Activated naive CD4-positive, alpha-beta T cell treated with anti-CD3 and anti-CD28 coated beads for 36 hours (primary cell): ENCODE measurements at regions of chr11 and their contacts with region 1.

Region 1: GRCh38 chr11:130131961-130132850 is 27.4 kb upstream of the ST14 start:
- DNase-seq: peak; percentile 63
- H3K4me3 Mint-ChIP-seq: no peak overlapping the region
- H3K27ac Mint-ChIP-seq: no peak overlapping the region
- H3K4me1 Mint-ChIP-seq: no peaks in the 10 kb centered on the region
- H3K27me3 Mint-ChIP-seq: no peaks in the 10 kb centered on the region

Region 2: GRCh38 chr11:129766898-129767604 is 365.2 kb before region 1 on chr11:
- CTCF ChIA-PET with region 1: no interaction called
- intact Hi-C with region 1: loop called (anchors 1 kb)
- DNase-seq: peak; percentile 38
- H3K4me3 Mint-ChIP-seq: no peak overlapping the region
- H3K27ac Mint-ChIP-seq: no peak overlapping the region
- H3K4me1 Mint-ChIP-seq: peaks cover 5% of the 10 kb centered on the region
- H3K27me3 Mint-ChIP-seq: no peaks in the 10 kb centered on the region

Region 3: DNA sequence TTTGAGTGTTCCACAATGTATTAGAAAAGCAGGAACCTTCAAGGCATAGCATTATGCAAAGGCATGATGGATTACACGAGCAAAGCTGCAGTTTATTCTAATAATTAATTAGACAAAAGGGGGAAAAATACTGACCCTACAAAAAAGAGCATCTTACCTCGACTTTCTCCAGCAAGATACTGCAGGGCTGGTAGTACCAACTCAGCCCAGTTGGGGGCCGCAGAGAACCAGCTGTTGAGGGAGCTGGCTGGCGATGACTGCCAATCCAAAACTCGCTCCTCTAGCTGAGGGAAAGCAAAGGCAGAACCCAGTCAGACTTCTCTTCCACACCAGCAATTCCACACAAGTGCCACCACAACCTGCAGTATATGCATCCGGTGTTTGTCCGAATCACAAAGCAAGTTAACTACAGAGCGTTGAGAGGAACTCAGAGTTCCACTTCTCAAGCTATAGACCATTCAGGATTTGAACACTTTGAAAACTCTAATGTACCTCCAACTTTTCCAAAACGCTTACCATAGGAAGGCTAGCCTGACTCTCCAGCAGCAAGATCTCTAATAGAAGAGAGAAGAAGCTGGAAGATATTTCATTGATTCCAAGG is 250.5 kb before region 1 on chr11:
- CTCF ChIA-PET with region 1: interaction called, 15 read pairs
- intact Hi-C with region 1: no loop called
- DNase-seq: peak; percentile 62
- H3K4me3 Mint-ChIP-seq: no peak overlapping the region
- H3K27ac Mint-ChIP-seq: no peak overlapping the region
- H3K4me1 Mint-ChIP-seq: no peaks in the 10 kb centered on the region
- H3K27me3 Mint-ChIP-seq: no peaks in the 10 kb centered on the region

Region 4: GRCh38 chr11:129930296-129930695 is 201.9 kb before region 1 on chr11:
- CTCF ChIA-PET with region 1: interaction called, 165 read pairs
- intact Hi-C with region 1: no loop called
- DNase-seq: no peak
- H3K4me3 Mint-ChIP-seq: no peak overlapping the region
- H3K27ac Mint-ChIP-seq: no peak overlapping the region
- H3K4me1 Mint-ChIP-seq: no peaks in the 10 kb centered on the region
- H3K27me3 Mint-ChIP-seq: no peaks in the 10 kb centered on the region

Region 5: GRCh38 chr11:129992161-129992944 is 139.9 kb before region 1 on chr11:
- CTCF ChIA-PET with region 1: interaction called, 32 read pairs
- intact Hi-C with region 1: loop called (anchors 1 kb)
- DNase-seq: peak; percentile 71
- H3K4me3 Mint-ChIP-seq: no peak overlapping the region
- H3K27ac Mint-ChIP-seq: no peak overlapping the region
- H3K4me1 Mint-ChIP-seq: peaks cover 6% of the 10 kb centered on the region
- H3K27me3 Mint-ChIP-seq: no peaks in the 10 kb centered on the region

Region 6: DNA sequence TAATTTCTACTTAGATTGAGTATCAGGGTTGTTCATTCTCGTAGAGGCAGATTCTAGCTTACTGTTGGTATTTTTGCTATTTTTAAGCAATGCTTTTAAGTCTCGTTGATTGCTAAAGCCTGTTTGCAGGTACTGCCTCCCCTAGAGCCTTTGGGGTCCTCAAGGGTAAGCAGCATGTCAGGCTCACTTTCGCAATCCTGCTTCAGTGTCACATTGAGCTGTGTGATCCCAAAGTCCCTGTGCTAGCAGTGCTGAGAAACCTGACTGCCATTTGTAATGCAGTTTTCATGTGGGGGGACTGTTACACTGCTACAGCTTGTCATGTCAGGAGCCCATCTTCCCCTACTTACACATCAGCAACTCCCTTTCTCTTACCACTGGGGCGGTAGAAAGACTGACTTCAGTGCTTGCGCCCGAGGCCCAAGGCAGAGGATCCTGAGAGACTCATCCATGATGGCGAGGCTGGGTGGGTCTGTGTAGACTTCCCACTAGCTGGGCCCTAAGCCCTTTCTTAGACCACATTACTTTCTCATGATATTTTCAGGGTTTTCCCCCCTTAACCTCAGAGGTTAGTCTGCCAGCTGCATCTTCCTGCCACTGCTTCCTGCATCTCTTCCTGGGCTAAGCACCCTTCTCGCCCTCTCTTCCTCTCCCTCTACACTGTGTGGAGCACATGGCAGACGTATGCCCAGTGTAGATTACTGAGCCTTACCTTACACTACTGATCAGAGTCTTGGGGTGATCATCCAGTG is 13.4 kb before region 1 on chr11:
- CTCF ChIA-PET with region 1: interaction called, 10 read pairs
- intact Hi-C with region 1: no loop called
- DNase-seq: peak; percentile 35
- H3K4me3 Mint-ChIP-seq: no peak overlapping the region
- H3K27ac Mint-ChIP-seq: no peak overlapping the region
- H3K4me1 Mint-ChIP-seq: peaks cover 46% of the 10 kb centered on the region
- H3K27me3 Mint-ChIP-seq: peaks cover 7% of the 10 kb centered on the region

Region 7: GRCh38 chr11:130585545-130585944 is 453.3 kb after region 1 on chr11:
- CTCF ChIA-PET with region 1: no interaction called
- intact Hi-C with region 1: no loop called
- DNase-seq: no peak
- H3K4me3 Mint-ChIP-seq: no peak overlapping the region
- H3K27ac Mint-ChIP-seq: no peak overlapping the region
- H3K4me1 Mint-ChIP-seq: no peaks in the 10 kb centered on the region
- H3K27me3 Mint-ChIP-seq: peaks cover 3% of the 10 kb centered on the region